ENCODE measurements at regions of chr2 and their contacts with region 1.

Region 1: GRCh38 chr2:120312861-120313694 is 32.9 kb upstream of the INHBB start:
- DNase-seq: peak; percentile 79 to 84
- H3K4me3 ChIP-seq: peak overlapping the region; percentile 18
- H3K4me3 Mint-ChIP-seq: peak overlapping the region; percentile 73
- H3K27ac Mint-ChIP-seq: no peak overlapping the region
- H3K4me1 ChIP-seq: no peaks in the 10 kb centered on the region
- H3K4me1 Mint-ChIP-seq: no peaks in the 10 kb centered on the region
- H3K27me3 ChIP-seq: no peaks in the 10 kb centered on the region
- H3K27me3 Mint-ChIP-seq: no peaks in the 10 kb centered on the region
- CTCF ChIP-seq: peak; percentile 92 to 94

Region 2: GRCh38 chr2:120109186-120110061 is 203.7 kb before region 1 on chr2:
- CTCF ChIA-PET with region 1: interaction called, 4 read pairs
- POLR2A ChIA-PET with region 1: no interaction called
- intact Hi-C with region 1: loop called (anchors 1 kb)
- DNase-seq: peak in 1 of 2 experiments; percentile 10
- H3K4me3 ChIP-seq: no peak overlapping the region
- H3K4me3 Mint-ChIP-seq: no peak overlapping the region
- H3K27ac Mint-ChIP-seq: no peak overlapping the region
- H3K4me1 ChIP-seq: no peaks in the 10 kb centered on the region
- H3K4me1 Mint-ChIP-seq: peaks cover 9% of the 10 kb centered on the region
- H3K27me3 ChIP-seq: no peaks in the 10 kb centered on the region
- H3K27me3 Mint-ChIP-seq: no peaks in the 10 kb centered on the region
- CTCF ChIP-seq: peak in 1 of 2 experiments; percentile 10

Region 3: DNA sequence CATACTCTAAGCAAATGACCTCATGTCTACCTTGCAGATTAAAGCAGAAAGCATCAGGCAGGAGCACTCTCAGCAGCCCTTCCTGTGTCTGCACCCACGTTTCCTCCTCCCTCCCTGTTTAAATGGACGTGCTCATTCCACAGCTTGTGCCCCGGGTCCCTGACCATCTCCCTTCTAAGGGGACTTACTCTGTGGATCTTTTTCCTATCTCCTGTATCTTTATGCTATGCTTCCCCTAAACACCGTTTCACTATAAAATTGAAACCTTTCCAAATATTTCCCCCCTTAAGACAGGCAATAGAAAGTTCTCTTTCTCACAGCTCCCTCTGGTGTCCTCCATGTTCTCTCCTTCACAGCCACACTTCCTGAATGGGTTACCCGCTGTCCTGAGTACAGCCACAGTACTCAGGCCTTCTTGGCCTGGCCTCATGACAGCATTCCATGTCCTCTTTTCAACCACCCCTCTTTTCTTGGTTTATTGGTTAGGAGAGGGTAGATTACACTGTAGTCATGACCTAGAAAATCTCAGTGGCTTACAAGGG is 131.0 kb before region 1 on chr2:
- CTCF ChIA-PET with region 1: interaction called, 3 read pairs
- POLR2A ChIA-PET with region 1: no interaction called
- intact Hi-C with region 1: loop called (anchors 2 kb)
- DNase-seq: no peak
- H3K4me3 ChIP-seq: no peak overlapping the region
- H3K4me3 Mint-ChIP-seq: no peak overlapping the region
- H3K27ac Mint-ChIP-seq: no peak overlapping the region
- H3K4me1 ChIP-seq: no peaks in the 10 kb centered on the region
- H3K4me1 Mint-ChIP-seq: no peaks in the 10 kb centered on the region
- H3K27me3 ChIP-seq: no peaks in the 10 kb centered on the region; the same call in 1 of the 2 replicates
- H3K27me3 Mint-ChIP-seq: no peaks in the 10 kb centered on the region
- CTCF ChIP-seq: no peak

Region 4: GRCh38 chr2:120252225-120253021 is 60.7 kb before region 1 on chr2 and contains the start of gene RALB:
- CTCF ChIA-PET with region 1: interaction called, 36 read pairs
- POLR2A ChIA-PET with region 1: no interaction called
- intact Hi-C with region 1: loop called (anchors 1 kb)
- DNase-seq: peak; percentile 100
- H3K4me3 ChIP-seq: peak within 1 kb of the TSS; percentile 79
- H3K4me3 Mint-ChIP-seq: peak within 1 kb of the TSS; percentile 82
- H3K27ac Mint-ChIP-seq: peak within 1 kb of the TSS; percentile 68
- H3K4me1 ChIP-seq: peaks cover 18% of the 10 kb centered on the region
- H3K4me1 Mint-ChIP-seq: peaks cover 27% of the 10 kb centered on the region
- H3K27me3 ChIP-seq: no peaks in the 10 kb centered on the region
- H3K27me3 Mint-ChIP-seq: no peaks in the 10 kb centered on the region
- CTCF ChIP-seq: no peak
- total RNA-seq, gene RALB: 56.5 and 59.4 TPM in 2 replicates

Region 5: DNA sequence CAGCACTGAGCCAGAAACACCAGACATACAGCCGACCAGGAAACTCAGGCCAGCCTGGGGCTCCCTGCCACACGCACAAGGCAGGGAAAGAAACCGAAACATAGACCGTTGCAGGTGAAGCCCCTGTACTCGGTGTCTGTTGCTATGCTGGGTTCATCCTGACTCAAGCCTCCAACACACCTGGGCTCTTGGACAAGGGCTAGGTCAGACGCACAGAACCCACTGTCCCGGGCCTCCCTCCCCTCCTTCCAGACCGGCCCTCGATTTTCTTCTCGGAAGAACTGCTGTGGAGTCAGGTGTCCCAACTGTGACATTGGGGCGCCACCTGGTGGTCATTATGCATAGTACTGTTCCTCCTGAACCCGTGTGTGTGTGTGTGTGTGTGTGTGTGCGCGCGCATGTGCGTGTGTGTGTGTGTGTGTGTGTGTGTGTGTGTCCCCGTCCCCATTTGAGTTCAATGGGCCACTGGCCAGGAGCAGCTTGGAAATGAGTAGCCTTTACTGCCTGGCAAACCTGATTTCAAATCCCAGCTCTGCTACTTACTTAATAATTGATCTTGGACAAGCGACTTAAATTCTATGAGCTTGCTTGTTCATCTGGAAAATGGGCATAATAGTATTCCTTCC is 367.2 kb after region 1 on chr2:
- CTCF ChIA-PET with region 1: interaction called, 10 read pairs
- POLR2A ChIA-PET with region 1: no interaction called
- intact Hi-C with region 1: loop called (anchors 1 kb)
- DNase-seq: peak; percentile 85 to 87
- H3K4me3 ChIP-seq: no peak overlapping the region
- H3K4me3 Mint-ChIP-seq: peak overlapping the region; percentile 24
- H3K27ac Mint-ChIP-seq: peak overlapping the region; percentile 50
- H3K4me1 ChIP-seq: no peaks in the 10 kb centered on the region
- H3K4me1 Mint-ChIP-seq: peaks cover 4% of the 10 kb centered on the region
- H3K27me3 ChIP-seq: no peaks in the 10 kb centered on the region
- H3K27me3 Mint-ChIP-seq: no peaks in the 10 kb centered on the region
- CTCF ChIP-seq: peak; percentile 73 to 75

Measured in Caco-2 (cell line).